GM18951 (cell line): ENCODE measurements at regions of chr17 and their contacts with region 1.

Region 1: GRCh38 chr17:27379888-27380534 is 76.2 kb upstream of the KSR1 start:
- POLR2A ChIP-seq: no peak

Region 2: DNA sequence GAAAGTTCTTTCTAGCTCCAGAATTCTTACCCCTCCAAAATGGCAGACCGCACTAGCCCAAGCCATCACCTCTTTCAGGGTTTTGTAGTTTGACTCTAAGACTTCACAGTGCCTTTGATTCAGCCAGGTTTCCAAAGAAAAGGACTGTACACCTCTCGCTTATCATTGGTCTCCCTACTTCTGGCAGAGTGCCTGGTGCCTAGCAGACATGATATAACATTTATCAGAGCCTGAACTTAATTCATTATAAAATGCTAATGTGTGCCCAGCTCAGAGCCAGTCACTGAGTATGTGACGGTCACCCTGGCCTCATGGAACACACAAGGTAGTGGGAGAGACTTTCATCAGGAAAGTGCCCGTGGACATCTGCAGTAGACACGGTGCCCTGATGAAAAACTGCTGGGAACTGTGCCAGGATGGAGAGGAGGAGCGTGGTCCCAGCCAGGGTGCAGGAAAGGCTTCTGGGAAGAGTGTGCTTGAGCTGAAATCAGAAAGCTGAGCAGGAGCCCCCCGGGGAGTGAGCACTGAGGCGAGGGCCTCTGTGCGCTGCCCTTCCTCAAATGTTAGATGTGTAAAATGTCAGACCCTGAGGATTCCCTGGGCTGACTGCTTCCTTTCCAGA is 216.7 kb after region 1 on chr17:
- in situ Hi-C with region 1: loop called (anchors 10 kb)
- POLR2A ChIP-seq: no peak